ENCODE measurements at regions of chr17 and their contacts with region 1.

Region 1: GRCh38 chr17:77542551-77543490 is 402.1 kb downstream of the SEC14L1 start:
- DNase-seq: peak; percentile 91
- H3K4me3 ChIP-seq: no peak overlapping the region
- H3K27ac ChIP-seq: peak overlapping the region; percentile 11 to 12
- H3K4me1 ChIP-seq: peaks cover 7% of the 10 kb centered on the region
- H3K27me3 ChIP-seq: no peaks in the 10 kb centered on the region
- CTCF ChIP-seq: peak; percentile 78 to 84 (median 84)
- POLR2A ChIP-seq: no peak

Region 2: GRCh38 chr17:77476931-77477877 is 65.6 kb before region 1 on chr17:
- intact Hi-C with region 1: no loop called
- DNase-seq: peak; percentile 85
- H3K4me3 ChIP-seq: no peak overlapping the region
- H3K27ac ChIP-seq: peak overlapping the region; percentile 57 to 74
- H3K4me1 ChIP-seq: peaks cover 100% of the 10 kb centered on the region
- H3K27me3 ChIP-seq: no peaks in the 10 kb centered on the region
- CTCF ChIP-seq: no peak
- POLR2A ChIP-seq: no peak

Region 3: GRCh38 chr17:78013683-78014467 is 471.1 kb after region 1 on chr17:
- intact Hi-C with region 1: loop called (anchors 10 kb)
- DNase-seq: peak; percentile 77
- H3K4me3 ChIP-seq: no peak overlapping the region
- H3K27ac ChIP-seq: no peak overlapping the region
- H3K4me1 ChIP-seq: no peaks in the 10 kb centered on the region
- H3K27me3 ChIP-seq: no peaks in the 10 kb centered on the region
- CTCF ChIP-seq: peak; percentile 64 to 76 (median 75)
- POLR2A ChIP-seq: no peak